A549 (cell line): ENCODE measurements at regions of chr11 and their contacts with region 1.

Region 1: DNA sequence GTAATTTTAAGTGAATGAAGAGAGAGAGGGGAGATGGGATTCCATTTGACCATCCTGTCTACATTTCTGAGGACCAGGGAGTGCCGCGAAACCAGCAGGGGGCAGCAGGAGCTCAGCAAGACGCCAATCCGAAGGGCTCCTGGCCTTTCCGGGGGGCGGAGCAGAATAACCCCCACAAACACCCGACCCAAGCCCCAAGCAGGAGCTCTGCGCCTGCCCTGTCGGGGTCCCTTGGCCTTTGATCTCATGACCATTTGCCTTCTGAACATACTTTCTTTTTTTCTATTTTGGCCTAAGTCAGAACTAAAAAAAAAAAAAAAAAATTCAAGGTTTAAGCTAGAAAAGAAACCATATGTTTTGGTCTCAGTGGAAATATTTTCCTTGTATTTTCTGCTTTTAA is 21.9 kb upstream of the SCN2B start:
- DNase-seq: peak; percentile 58
- ATAC-seq: peak; percentile 70 to 92; a peak in 4 of 6 replicates
- H3K4me3 ChIP-seq: no peak overlapping the region
- H3K27ac ChIP-seq: no peak overlapping the region
- H3K4me1 ChIP-seq: peaks cover 20% of the 10 kb centered on the region
- CTCF ChIP-seq: peak; percentile 70
- EP300 ChIP-seq: no peak
- POLR2A ChIP-seq: no peak
- RAD21 ChIP-seq: peak; percentile 83 to 85

Region 2: DNA sequence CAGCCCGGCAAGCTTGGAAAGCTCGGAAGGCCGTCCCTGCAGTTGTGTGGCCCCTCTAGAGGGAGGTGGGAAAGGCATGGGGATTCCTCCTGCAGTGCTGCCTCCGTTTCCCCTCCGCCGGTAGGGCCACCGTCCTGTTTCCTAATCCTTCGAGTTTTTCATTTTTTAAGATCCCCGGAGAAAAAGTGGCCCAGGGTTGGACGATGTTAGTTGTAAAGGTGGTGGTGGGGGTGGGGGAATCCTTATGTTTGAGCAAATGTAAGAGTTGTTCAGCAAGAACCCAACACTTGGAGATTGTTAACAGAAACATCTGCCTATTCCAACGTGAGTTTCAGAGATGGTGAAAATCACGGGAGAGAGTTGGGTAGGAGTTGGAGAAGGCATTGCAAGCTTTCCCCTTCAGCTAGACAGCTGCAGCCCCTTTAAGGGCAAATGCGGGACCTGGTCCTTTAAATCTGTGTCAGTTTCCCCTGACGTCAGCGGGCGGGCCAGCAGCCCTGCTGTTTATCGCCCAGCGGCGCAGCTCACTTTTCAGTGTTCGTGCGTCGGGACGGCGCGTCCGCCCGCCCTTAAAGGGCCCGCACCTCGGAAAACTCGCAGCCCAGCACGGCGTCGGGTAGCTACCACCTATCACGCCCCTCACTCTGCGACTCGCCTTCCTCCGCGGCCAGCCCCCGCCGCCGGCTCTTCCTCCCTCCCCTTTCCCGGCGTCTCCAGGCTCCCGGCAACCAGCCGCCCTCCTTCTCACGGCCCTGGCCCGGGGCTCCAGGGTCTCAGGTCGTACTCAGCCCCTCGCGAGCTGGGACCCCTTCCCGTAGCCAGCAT is 1019.9 kb before region 1 on chr11 and contains the start of gene SIDT2:
- CTCF ChIA-PET with region 1: no interaction called
- POLR2A ChIA-PET with region 1: no interaction called
- DNase-seq: peak; percentile 76 to 83
- ATAC-seq: peak; percentile 84 to 94
- H3K4me3 ChIP-seq: peak within 1 kb of the TSS; percentile 91
- H3K27ac ChIP-seq: peak within 1 kb of the TSS; percentile 86 to 95
- H3K4me1 ChIP-seq: peaks cover 13% of the 10 kb centered on the region
- CTCF ChIP-seq: no peak
- EP300 ChIP-seq: no peak
- POLR2A ChIP-seq: peak; percentile 35; the same call in 1 of the 2 replicates
- RAD21 ChIP-seq: no peak; a peak in 1 of 5 replicates
- polyA plus RNA-seq, gene SIDT2: 8.5 and 15.4 TPM in 2 replicates

Region 3: GRCh38 chr11:118136796-118137195 is 61.6 kb before region 1 on chr11:
- CTCF ChIA-PET with region 1: no interaction called
- POLR2A ChIA-PET with region 1: no interaction called
- DNase-seq: no peak
- ATAC-seq: no peak
- H3K4me3 ChIP-seq: no peak overlapping the region
- H3K27ac ChIP-seq: no peak overlapping the region
- H3K4me1 ChIP-seq: no peaks in the 10 kb centered on the region
- CTCF ChIP-seq: no peak
- EP300 ChIP-seq: no peak
- POLR2A ChIP-seq: no peak
- RAD21 ChIP-seq: no peak

Region 4: GRCh38 chr11:118171269-118172062 is 26.9 kb before region 1 on chr11:
- CTCF ChIA-PET with region 1: interaction called, 15 read pairs
- POLR2A ChIA-PET with region 1: interaction called, 3 read pairs
- DNase-seq: peak; percentile 37 to 82
- ATAC-seq: peak; percentile 81 to 91; a peak in 5 of 6 replicates
- H3K4me3 ChIP-seq: no peak overlapping the region
- H3K27ac ChIP-seq: no peak overlapping the region
- H3K4me1 ChIP-seq: peaks cover 10% of the 10 kb centered on the region; the same call in 2 of the 3 replicates
- CTCF ChIP-seq: peak; percentile 71
- EP300 ChIP-seq: no peak
- POLR2A ChIP-seq: no peak
- RAD21 ChIP-seq: peak; percentile 72 to 77

Region 5: GRCh38 chr11:118180300-118180703 is 18.1 kb before region 1 on chr11:
- CTCF ChIA-PET with region 1: interaction called, 14 read pairs
- POLR2A ChIA-PET with region 1: no interaction called
- DNase-seq: peak in 1 of 2 experiments; percentile 18
- ATAC-seq: peak; percentile 77 to 85
- H3K4me3 ChIP-seq: no peak overlapping the region
- H3K27ac ChIP-seq: peak overlapping the region in 1 of 2 experiments; percentile 68; a peak in 2 of 6 replicates
- H3K4me1 ChIP-seq: peaks cover 11% of the 10 kb centered on the region
- CTCF ChIP-seq: no peak
- EP300 ChIP-seq: no peak
- POLR2A ChIP-seq: no peak
- RAD21 ChIP-seq: no peak

Region 6: DNA sequence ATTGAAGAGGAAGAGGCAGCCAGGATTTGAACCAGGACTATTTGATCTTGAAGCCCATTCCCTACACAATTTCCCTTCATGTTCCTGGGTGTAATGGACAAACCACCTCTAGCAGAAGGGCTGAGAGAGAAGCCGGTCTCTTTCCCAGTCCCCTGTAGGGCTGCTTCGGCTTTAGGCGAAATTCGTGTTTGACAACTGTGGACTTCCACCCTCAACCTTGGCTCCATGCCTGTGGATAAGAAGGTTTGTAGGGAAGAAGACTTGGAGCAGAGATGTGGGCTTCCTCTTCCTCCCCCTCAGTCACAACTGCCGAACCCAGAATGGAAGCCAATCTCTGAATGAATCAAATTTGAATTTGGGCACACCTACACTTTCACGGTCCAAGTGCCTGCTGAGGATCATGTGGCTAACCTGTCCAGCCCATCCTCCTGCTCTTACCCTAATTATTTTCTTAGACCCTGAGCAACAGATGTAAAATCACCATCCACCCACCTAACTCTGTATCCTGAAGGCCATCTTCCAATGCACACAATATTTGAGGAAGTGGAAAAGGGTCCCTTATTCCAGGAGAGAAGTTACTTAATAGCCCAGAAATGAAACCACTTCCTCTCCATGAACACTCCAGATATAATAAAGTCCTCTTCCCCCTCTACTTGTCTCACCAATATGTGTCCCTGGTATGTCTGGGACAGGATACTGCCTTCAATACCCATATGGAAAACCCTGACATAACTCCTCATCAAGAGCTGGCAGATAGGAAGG is 11.8 kb before region 1 on chr11:
- CTCF ChIA-PET with region 1: interaction called, 14 read pairs
- POLR2A ChIA-PET with region 1: no interaction called
- DNase-seq: no peak
- ATAC-seq: no peak
- H3K4me3 ChIP-seq: no peak overlapping the region
- H3K27ac ChIP-seq: no peak overlapping the region
- H3K4me1 ChIP-seq: no peaks in the 10 kb centered on the region
- CTCF ChIP-seq: no peak
- EP300 ChIP-seq: no peak
- POLR2A ChIP-seq: no peak
- RAD21 ChIP-seq: no peak

Region 7: DNA sequence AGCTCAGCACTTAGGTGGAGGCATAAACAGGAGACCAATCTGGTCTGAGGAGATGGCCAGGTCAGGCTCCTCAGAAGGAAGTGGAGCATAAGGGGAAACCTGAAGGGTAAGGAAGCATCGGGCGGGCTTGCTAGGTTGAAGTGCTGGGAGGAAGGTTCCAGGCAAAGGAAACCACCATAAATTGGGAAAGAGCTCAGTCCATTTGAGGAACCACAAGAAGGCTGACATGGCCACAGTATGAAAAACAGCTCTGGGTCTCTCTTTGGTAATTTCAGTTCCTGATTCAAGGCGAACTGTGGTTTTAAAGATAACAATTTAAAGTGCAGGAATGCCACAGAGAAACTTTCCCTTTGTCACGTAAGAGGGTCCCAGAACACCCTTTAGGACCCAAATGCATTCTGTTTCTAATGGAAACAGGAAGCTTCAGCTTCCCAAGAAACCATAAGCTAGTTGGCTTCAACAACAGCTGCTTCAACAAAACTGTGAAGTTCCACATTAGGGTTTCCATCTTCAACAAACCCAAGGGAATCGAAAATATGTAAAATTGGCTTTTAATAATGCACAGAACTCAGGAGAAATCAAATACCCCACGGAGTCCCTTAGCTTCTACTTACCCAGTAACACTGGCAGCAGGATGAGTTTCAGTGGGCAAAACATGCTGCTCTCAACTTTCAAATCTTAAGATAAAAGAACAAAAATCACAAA is 16.0 kb after region 1 on chr11:
- CTCF ChIA-PET with region 1: interaction called, 10 read pairs
- POLR2A ChIA-PET with region 1: no interaction called
- DNase-seq: no peak
- ATAC-seq: no peak
- H3K4me3 ChIP-seq: no peak overlapping the region
- H3K27ac ChIP-seq: no peak overlapping the region
- H3K4me1 ChIP-seq: no peaks in the 10 kb centered on the region
- CTCF ChIP-seq: no peak
- EP300 ChIP-seq: no peak
- POLR2A ChIP-seq: no peak
- RAD21 ChIP-seq: no peak

Region 8: DNA sequence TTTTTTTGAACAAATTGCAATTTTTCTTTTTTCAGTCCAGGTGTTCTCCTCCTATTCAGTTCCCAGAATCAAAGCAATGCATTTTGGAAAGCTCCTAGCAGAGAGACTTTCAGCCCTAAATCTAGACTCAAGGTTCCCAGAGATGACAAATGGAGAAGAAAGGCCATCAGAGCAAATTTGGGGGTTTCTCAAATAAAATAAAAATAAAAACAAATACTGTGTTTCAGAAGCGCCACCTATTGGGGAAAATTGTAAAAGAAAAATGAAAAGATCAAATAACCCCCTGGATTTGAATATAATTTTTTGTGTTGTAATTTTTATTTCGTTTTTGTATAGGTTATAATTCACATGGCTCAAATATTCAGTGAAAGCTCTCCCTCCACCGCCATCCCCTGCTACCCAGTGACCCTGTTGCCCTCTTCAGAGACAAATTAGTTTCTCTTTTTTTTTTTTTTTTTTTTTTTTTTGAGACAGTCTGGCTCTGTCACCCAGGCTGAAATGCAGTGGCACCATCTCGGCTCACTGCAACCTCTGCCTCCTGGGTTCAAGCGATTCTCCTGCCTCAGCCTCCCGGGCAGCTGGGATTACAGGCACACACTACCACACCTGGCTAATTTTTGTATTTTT is 154.8 kb after region 1 on chr11:
- CTCF ChIA-PET with region 1: interaction called, 18 read pairs
- POLR2A ChIA-PET with region 1: no interaction called
- DNase-seq: no peak
- ATAC-seq: no peak
- H3K4me3 ChIP-seq: no peak overlapping the region
- H3K27ac ChIP-seq: no peak overlapping the region
- H3K4me1 ChIP-seq: no peaks in the 10 kb centered on the region
- CTCF ChIP-seq: peak; percentile 51
- EP300 ChIP-seq: no peak
- POLR2A ChIP-seq: no peak
- RAD21 ChIP-seq: peak; percentile 38 to 55; a peak in 4 of 5 replicates